Left lung (tissue), 14 donors: ENCODE measurements at regions of chr12 and their contacts with region 1.

Region 1: DNA sequence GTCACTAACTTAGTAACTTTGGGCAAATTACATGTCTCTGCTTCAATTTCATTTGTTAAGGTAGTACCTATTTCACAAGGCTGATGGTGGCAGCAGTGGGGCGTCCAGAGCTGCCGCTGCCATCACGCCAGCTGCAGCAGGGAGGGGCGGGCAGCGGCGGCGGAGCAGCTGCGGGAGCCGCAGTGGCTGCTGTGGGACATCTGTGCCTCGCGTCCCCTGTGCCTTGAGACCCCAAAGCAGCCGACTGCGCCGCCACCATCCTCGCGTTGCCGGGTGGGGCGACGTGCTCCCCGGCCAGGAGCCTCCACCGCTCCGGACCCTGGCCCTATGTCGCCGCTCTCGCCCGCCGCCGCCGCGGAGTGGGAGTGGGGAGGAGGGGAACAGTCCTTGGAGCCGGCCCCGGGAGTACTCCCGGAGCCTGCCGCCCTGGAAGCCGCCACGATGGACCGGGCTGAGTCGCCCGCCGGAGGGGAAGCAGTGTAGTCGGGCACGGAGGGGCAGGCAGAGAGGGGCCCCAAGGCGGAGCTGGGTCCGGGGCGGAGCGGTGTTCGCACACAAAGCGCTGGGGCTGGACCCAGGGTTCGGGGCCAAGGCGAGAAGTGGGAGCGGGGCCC is 51.4 kb downstream of the A2M start:
- DNase-seq: peak; percentile 63 to 89 (median 76)
- ATAC-seq: peak; percentile 80
- H3K4me3 ChIP-seq: peak overlapping the region; percentile 60 to 80
- H3K27ac ChIP-seq: peak overlapping the region; percentile 88 to 99
- H3K4me1 ChIP-seq: peaks cover 0 to 7% of the 10 kb centered on the region in 2 donors
- H3K27me3 ChIP-seq: peaks cover 0 to 11% of the 10 kb centered on the region in 2 donors
- CTCF ChIP-seq: peak; percentile 10 to 40

Region 2: GRCh38 chr12:9319044-9319841 is 254.9 kb after region 1 on chr12:
- intact Hi-C with region 1: loop called in 1 of 2 experiments (anchors 10 kb)
- DNase-seq: no peak
- ATAC-seq: peak; percentile 69
- H3K4me3 ChIP-seq: no peak overlapping the region
- H3K27ac ChIP-seq: no peak overlapping the region
- H3K4me1 ChIP-seq: no peaks in the 10 kb centered on the region
- H3K27me3 ChIP-seq: no peaks in the 10 kb centered on the region
- CTCF ChIP-seq: no peak